ENCODE measurements at regions of chr4 and their contacts with region 1.

Region 1: GRCh38 chr4:143513306-143514168 is at the start of gene SMARCA5:
- DNase-seq: peak; percentile 98
- H3K4me3 ChIP-seq: peak within 1 kb of the TSS; percentile 96
- H3K27ac ChIP-seq: peak within 1 kb of the TSS; percentile 81
- H3K4me1 ChIP-seq: peaks cover 36% of the 10 kb centered on the region
- CTCF ChIP-seq: no peak
- total RNA-seq, gene SMARCA5: 52.4 and 63.4 TPM in 2 replicates

Region 2: GRCh38 chr4:143184217-143185116 is 329.1 kb before region 1 on chr4 and contains the start of gene USP38:
- CTCF ChIA-PET with region 1: no interaction called
- POLR2A ChIA-PET with region 1: interaction called, 4 read pairs
- intact Hi-C with region 1: loop called (anchors 1 kb)
- DNase-seq: peak; percentile 90
- H3K4me3 ChIP-seq: peak within 1 kb of the TSS; percentile 94
- H3K27ac ChIP-seq: peak within 1 kb of the TSS; percentile 75
- H3K4me1 ChIP-seq: peaks cover 29% of the 10 kb centered on the region
- CTCF ChIP-seq: 0 out of 2 replicates have a peak, but pooled peaks have one; percentile 46
- total RNA-seq, gene USP38: 21.8 and 23.6 TPM in 2 replicates

Region 3: DNA sequence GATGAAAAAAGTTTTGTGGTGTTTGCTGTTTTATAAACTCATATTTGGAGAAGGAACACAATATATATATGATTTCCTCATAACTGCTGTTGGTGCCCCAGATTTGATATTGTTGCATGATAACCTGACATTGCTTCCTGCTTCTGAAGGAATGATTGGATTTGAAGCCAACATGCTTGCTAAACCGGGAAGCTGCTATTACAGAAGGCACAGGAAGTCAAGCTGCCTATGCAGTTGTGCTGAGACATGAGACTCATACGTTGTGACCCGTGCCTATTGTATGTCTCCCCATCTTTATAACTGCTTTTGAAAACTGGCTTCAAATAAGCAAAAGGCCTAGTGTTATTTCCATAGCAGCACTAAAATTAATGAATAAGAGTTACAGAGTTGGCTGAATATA is 144.0 kb before region 1 on chr4:
- CTCF ChIA-PET with region 1: no interaction called
- POLR2A ChIA-PET with region 1: no interaction called
- intact Hi-C with region 1: no loop called
- DNase-seq: no peak
- H3K4me3 ChIP-seq: no peak overlapping the region
- H3K27ac ChIP-seq: peak overlapping the region; percentile 33
- H3K4me1 ChIP-seq: peaks cover 39% of the 10 kb centered on the region
- CTCF ChIP-seq: no peak

Region 4: DNA sequence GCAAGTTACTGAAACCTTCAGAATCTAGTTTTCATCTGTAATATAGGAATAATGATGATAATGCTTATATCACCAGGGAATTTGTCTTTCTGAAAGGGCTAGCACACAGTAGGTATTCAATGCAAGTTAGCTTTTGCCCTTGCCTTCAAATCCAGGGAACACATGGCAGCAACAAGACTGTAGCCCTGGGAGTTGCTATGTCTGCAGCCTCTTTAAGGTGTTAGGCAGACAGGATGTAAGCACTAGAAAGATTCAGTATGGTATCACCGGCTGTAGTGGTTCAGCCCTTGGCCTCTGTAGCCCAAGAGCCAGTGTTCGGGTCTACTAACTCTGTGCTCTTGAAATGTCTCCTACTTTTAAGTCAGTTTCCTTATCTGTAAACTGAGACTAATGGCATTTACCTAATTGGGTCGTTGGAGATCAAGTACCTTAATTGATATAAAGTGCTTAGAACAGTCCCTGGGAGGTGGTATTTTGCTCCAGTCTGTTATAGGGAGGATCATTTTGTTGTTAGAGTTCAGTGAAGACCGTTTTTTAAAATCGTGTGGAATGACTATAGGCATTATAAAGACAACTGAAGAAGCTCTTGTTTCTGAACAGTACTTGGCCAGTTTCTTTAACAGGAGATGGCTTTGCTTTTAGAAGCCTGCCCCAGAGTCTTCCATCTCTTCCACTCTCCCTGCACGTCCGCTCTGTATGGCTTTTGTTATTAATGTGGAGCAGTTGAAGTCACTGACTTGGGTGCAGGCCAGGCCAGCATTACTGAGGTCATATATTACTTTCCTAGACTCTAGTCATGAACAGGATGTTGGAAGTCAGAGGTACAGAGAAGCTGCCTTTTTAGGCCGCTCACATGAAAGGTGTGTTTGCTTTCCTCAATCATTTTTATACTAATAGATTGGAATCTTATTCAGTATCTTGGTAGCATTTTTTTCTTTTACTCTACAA is 132.1 kb before region 1 on chr4:
- CTCF ChIA-PET with region 1: no interaction called
- POLR2A ChIA-PET with region 1: interaction called, 11 read pairs
- intact Hi-C with region 1: no loop called
- DNase-seq: peak; percentile 80
- H3K4me3 ChIP-seq: peak overlapping the region; percentile 18
- H3K27ac ChIP-seq: peak overlapping the region; percentile 81
- H3K4me1 ChIP-seq: peaks cover 100% of the 10 kb centered on the region
- CTCF ChIP-seq: no peak

Region 5: GRCh38 chr4:143399113-143399949 is 114.2 kb before region 1 on chr4:
- CTCF ChIA-PET with region 1: no interaction called
- POLR2A ChIA-PET with region 1: interaction called, 3 read pairs
- intact Hi-C with region 1: loop called (anchors 5 kb)
- DNase-seq: peak; percentile 72
- H3K4me3 ChIP-seq: peak overlapping the region; percentile 12
- H3K27ac ChIP-seq: peak overlapping the region; percentile 97
- H3K4me1 ChIP-seq: peaks cover 99% of the 10 kb centered on the region
- CTCF ChIP-seq: peak; percentile 97

Region 6: DNA sequence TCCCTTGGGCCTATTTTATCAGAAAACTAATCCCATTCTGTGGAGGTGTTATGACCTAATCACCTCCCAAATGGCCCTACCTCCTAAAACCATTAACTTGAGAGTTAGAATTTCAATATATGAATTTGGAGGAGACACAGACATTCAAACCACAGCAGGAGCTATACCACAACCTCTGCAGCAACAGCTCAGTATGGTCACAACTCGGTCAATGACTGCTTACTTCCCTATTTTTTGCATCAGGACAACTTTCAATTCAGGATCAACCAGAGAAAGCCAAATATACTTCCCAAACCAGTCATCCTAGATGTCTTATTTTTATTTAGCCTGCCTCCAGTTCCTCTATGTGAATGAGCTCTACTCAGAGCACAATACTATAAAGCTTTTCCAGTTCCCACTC is 11.3 kb before region 1 on chr4:
- CTCF ChIA-PET with region 1: interaction called, 3 read pairs
- POLR2A ChIA-PET with region 1: interaction called, 10 read pairs
- intact Hi-C with region 1: no loop called
- DNase-seq: no peak
- H3K4me3 ChIP-seq: no peak overlapping the region
- H3K27ac ChIP-seq: no peak overlapping the region
- H3K4me1 ChIP-seq: no peaks in the 10 kb centered on the region
- CTCF ChIP-seq: no peak

Region 7: GRCh38 chr4:143768007-143768591 is 254.6 kb after region 1 on chr4:
- CTCF ChIA-PET with region 1: no interaction called
- POLR2A ChIA-PET with region 1: no interaction called
- intact Hi-C with region 1: no loop called
- DNase-seq: no peak
- H3K4me3 ChIP-seq: no peak overlapping the region
- H3K27ac ChIP-seq: no peak overlapping the region
- H3K4me1 ChIP-seq: no peaks in the 10 kb centered on the region
- CTCF ChIP-seq: no peak

Measured in OCI-LY7 (cell line).